ENCODE measurements at regions of chr14 and their contacts with region 1.

Region 1: GRCh38 chr14:73825551-73826188 is 26.0 kb upstream of the PTGR2 start:
- DNase-seq: peak; percentile 56
- H3K4me3 Mint-ChIP-seq: no peak overlapping the region
- H3K27ac Mint-ChIP-seq: no peak overlapping the region
- H3K4me1 Mint-ChIP-seq: peaks cover 18% of the 10 kb centered on the region
- H3K27me3 Mint-ChIP-seq: no peaks in the 10 kb centered on the region

Region 2: GRCh38 chr14:73644531-73645247 is 181.0 kb before region 1 on chr14 and contains the start of gene DNAL1:
- intact Hi-C with region 1: loop called (anchors 5 kb)
- DNase-seq: peak; percentile 92
- H3K4me3 Mint-ChIP-seq: peak within 1 kb of the TSS; percentile 86
- H3K27ac Mint-ChIP-seq: peak within 1 kb of the TSS; percentile 71
- H3K4me1 Mint-ChIP-seq: peaks cover 15% of the 10 kb centered on the region
- H3K27me3 Mint-ChIP-seq: no peaks in the 10 kb centered on the region
- total RNA-seq, gene DNAL1: 5.3 and 8.5 TPM in 2 replicates

Region 3: DNA sequence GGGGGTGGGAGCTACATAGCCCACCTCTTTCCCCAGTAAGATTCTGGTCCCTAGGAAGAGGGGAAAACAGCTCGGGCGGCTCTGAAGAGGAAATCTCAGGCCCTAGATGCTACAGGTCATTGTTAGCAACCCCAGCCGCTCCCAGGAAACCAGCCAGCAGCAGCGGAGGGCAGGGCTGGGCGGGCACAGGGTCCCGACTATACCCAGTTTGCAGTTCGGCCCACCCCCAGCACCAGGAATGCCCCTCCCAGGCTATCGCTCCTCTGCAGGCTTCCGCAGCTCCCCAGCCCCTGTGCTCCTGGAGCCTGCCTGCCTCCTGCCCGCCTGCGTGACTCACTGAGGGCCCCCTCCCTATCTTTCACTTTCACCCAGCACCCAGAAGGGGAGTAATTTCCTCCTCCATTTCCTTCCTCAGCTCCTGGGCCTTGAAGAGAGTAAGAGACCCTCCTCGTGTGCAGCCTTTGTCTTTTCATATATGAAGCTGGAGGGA is 84.2 kb before region 1 on chr14:
- intact Hi-C with region 1: loop called (anchors 5 kb)
- DNase-seq: peak; percentile 61
- H3K4me3 Mint-ChIP-seq: peak overlapping the region; percentile 83
- H3K27ac Mint-ChIP-seq: peak overlapping the region; percentile 86
- H3K4me1 Mint-ChIP-seq: peaks cover 62% of the 10 kb centered on the region
- H3K27me3 Mint-ChIP-seq: no peaks in the 10 kb centered on the region

Region 4: DNA sequence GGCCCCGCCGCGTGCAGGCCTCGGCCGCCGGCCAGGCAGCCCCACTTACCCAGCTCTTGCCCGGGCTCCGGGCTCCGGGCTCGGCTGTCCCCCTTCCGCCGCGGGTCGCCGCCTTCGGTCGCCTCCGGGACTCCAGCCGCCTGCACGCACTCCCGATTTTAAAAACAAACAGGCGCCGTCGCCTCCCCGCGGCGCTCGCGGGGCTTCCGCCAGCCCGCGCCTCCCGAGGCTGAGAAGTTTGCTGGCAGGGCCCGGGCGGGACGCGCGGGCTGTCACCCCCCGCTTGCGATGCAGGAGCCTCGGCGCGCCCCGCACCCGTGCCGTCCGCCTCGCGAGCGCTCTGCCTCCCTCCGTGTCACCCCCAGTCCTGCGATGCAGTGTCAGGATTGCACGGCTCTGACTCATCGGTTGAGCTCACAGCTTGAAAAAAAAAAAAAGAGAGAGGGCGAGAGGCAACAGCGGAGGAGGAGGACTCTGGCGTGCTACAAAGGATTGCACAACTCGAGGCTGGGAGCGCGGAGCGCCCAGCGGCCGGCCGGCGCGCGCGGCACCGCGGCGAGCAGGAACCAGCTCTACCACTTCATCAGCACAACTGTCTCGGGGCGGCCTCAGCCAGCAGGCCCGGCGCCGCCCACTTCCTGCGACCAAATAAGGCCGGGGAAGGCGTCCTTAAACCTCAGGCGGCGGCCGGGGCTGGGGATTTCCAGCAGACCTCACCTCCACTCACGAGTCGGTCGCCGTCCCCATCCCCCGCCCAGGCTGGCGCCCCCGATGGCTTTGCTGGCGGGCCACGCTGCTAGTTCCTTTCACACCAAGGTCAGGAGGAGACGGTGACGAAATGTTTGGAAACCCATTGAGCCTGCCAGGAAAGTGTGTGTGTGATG is 65.7 kb before region 1 on chr14:
- intact Hi-C with region 1: loop called (anchors 1 kb)
- DNase-seq: peak; percentile 95
- H3K4me3 Mint-ChIP-seq: peak overlapping the region; percentile 85
- H3K27ac Mint-ChIP-seq: peak overlapping the region; percentile 97
- H3K4me1 Mint-ChIP-seq: peaks cover 79% of the 10 kb centered on the region
- H3K27me3 Mint-ChIP-seq: no peaks in the 10 kb centered on the region